ENCODE measurements at regions of chr4 and their contacts with region 1.

Region 1: GRCh38 chr4:4269856-4270255 is 20.1 kb downstream of the LYAR start:
- DNase-seq: peak in 4 of 5 donors; percentile 9 to 80 (median 43)
- H3K4me3 ChIP-seq: no peak overlapping the region
- H3K4me3 Mint-ChIP-seq: peak overlapping the region; percentile 83 to 95 (median 88)
- H3K27ac ChIP-seq: peak overlapping the region; percentile 100
- H3K27ac Mint-ChIP-seq: peak overlapping the region; percentile 87 to 99 (median 97)
- H3K4me1 ChIP-seq: peaks cover 25% of the 10 kb centered on the region
- H3K4me1 Mint-ChIP-seq: peaks cover 78 to 91% (median 87%) of the 10 kb centered on the region in 3 donors
- H3K27me3 ChIP-seq: no peaks in the 10 kb centered on the region
- H3K27me3 Mint-ChIP-seq: no peaks in the 10 kb centered on the region

Region 2: GRCh38 chr4:4284827-4285618 is 15.2 kb after region 1 on chr4:
- CTCF ChIA-PET with region 1: interaction called, 15 read pairs
- POLR2A ChIA-PET with region 1: interaction called, 21 read pairs
- DNase-seq: no peak
- H3K4me3 ChIP-seq: no peak overlapping the region
- H3K4me3 Mint-ChIP-seq: peak overlapping the region in 1 of 7 donors; percentile 58
- H3K27ac ChIP-seq: no peak overlapping the region
- H3K27ac Mint-ChIP-seq: peak overlapping the region in 5 of 8 donors; percentile 0 to 68 (median 37)
- H3K4me1 ChIP-seq: peaks cover 23% of the 10 kb centered on the region
- H3K4me1 Mint-ChIP-seq: peaks cover 45 to 81% (median 60%) of the 10 kb centered on the region in 3 donors
- H3K27me3 ChIP-seq: no peaks in the 10 kb centered on the region
- H3K27me3 Mint-ChIP-seq: no peaks in the 10 kb centered on the region

Region 3: GRCh38 chr4:4289941-4290850 is 20.3 kb after region 1 on chr4 and contains the starts of genes LYAR and ZBTB49:
- CTCF ChIA-PET with region 1: interaction called, 15 read pairs
- POLR2A ChIA-PET with region 1: interaction called, 21 read pairs
- DNase-seq: peak; percentile 96 to 98 (median 97)
- H3K4me3 ChIP-seq: peak within 1 kb of the TSS; percentile 97
- H3K4me3 Mint-ChIP-seq: peak within 1 kb of the TSS; percentile 93 to 99 (median 96)
- H3K27ac ChIP-seq: peak within 1 kb of the TSS; percentile 85
- H3K27ac Mint-ChIP-seq: peak within 1 kb of the TSS; percentile 90 to 98 (median 96)
- H3K4me1 ChIP-seq: peaks cover 35% of the 10 kb centered on the region
- H3K4me1 Mint-ChIP-seq: peaks cover 66 to 85% (median 75%) of the 10 kb centered on the region in 3 donors
- H3K27me3 ChIP-seq: no peaks in the 10 kb centered on the region
- H3K27me3 Mint-ChIP-seq: no peaks in the 10 kb centered on the region
- total RNA-seq, gene LYAR: 95.8 to 103 TPM
- total RNA-seq, gene ZBTB49: 7.9 to 8.7 TPM

Region 4: GRCh38 chr4:4308800-4309441 is 39.1 kb after region 1 on chr4:
- CTCF ChIA-PET with region 1: no interaction called
- POLR2A ChIA-PET with region 1: no interaction called
- DNase-seq: no peak
- H3K4me3 ChIP-seq: no peak overlapping the region
- H3K4me3 Mint-ChIP-seq: no peak overlapping the region
- H3K27ac ChIP-seq: no peak overlapping the region
- H3K27ac Mint-ChIP-seq: peak overlapping the region in 3 of 8 donors; percentile 5 to 71 (median 54)
- H3K4me1 ChIP-seq: no peaks in the 10 kb centered on the region
- H3K4me1 Mint-ChIP-seq: peaks cover 14 to 26% (median 21%) of the 10 kb centered on the region in 3 donors
- H3K27me3 ChIP-seq: no peaks in the 10 kb centered on the region
- H3K27me3 Mint-ChIP-seq: no peaks in the 10 kb centered on the region

Region 5: GRCh38 chr4:4341861-4342650 is 72.2 kb after region 1 on chr4:
- CTCF ChIA-PET with region 1: no interaction called
- POLR2A ChIA-PET with region 1: no interaction called
- DNase-seq: no peak
- H3K4me3 ChIP-seq: no peak overlapping the region
- H3K4me3 Mint-ChIP-seq: no peak overlapping the region
- H3K27ac ChIP-seq: no peak overlapping the region
- H3K27ac Mint-ChIP-seq: no peak overlapping the region
- H3K4me1 ChIP-seq: peaks cover under 1% of the 10 kb centered on the region
- H3K4me1 Mint-ChIP-seq: peaks cover 3 to 24% (median 14%) of the 10 kb centered on the region in 3 donors
- H3K27me3 ChIP-seq: no peaks in the 10 kb centered on the region
- H3K27me3 Mint-ChIP-seq: peaks cover 0 to 1% of the 10 kb centered on the region in 2 donors

Measured in CD8-positive, alpha-beta memory T cell (primary cell).